ENCODE measurements at regions of chr6 and their contacts with region 1.

Region 1: DNA sequence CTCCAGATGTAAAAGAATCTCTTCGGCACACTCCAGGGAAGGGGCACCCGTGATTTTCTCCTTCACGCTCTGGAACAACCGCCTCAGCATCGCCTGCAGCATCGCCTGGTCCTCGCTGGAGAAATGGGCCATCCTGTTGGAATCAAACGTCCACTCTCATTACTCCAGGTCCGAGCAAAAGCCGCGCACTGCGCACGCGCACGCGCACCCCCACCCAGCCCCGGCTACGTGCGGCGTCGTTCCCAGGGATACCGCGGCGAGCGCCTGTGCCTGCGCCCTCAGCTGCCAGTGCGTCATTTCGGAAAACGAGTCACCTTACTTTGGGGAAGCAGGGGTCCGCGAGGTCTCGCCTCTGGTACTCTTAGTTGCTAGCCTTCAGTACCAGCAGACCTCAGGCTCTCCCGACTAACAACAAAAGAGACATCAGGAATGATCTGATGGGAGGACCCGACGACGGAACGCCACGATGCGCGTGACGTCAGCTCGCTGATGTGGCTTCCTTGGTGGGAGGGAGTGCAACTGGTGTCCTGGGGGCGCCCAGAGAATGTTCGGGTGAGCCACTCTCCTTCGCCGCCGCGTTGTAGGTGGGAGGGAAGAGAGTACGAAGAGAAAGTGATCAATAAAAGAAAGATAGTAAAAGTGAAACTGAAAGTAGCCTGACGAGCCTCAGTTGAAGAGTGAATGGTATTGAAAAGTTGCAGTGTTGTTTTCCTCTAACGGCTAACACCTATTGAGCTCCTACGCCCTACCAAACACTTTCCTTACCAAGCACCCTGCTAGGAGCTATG is at the start of gene TBC1D32:
- DNase-seq: peak; percentile 87
- H3K4me3 Mint-ChIP-seq: peak within 1 kb of the TSS; percentile 98
- H3K27ac Mint-ChIP-seq: peak within 1 kb of the TSS; percentile 97
- H3K4me1 Mint-ChIP-seq: peaks cover 38% of the 10 kb centered on the region
- H3K27me3 Mint-ChIP-seq: no peaks in the 10 kb centered on the region
- total RNA-seq, gene TBC1D32: 6.9 to 8.2 TPM

Region 2: DNA sequence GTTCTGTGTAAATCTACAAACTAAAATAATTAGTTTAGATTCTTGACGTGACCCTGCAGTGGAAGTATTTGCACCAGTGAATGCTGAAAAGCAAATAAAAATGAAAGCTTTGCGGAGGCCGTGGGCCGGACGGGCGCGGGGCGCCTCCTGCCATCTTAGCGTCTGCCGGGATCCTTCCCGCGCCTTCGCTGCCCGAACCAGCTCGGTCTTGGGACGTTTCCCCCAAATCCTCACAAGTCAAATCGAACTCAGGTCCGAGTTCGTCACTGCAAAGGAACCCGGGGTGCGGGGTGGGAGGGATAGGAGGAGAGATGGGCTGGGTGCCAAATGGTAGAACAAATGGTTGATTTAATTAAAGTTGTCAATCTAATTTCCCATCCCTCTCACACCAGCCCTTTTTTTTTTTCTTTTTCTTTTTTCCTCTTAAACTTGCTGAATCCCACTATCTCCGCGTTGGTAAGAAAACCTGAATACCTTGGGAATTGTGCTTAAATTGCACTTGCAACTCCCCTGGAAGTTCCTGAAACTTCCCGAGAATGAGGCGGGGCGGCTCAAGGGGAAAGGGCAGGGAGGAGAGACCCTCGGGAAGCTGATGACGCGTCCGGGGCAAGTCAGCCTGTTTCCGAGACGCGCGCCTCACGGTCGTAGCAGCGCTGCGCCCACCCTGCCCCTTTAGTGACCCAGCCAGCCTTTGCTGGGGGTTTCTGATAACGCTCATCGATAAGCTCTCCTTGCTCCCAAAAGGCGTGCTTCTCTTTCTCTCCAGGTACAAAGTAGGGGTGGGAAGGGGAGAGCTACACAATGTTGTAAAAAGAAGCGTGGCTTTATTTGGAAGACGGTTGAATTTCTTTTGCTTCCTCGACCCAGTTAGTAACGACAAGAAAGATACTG is 102.7 kb after region 1 on chr6:
- CTCF ChIA-PET with region 1: no interaction called
- intact Hi-C with region 1: loop called (anchors 2 kb)
- DNase-seq: peak; percentile 28
- H3K4me3 Mint-ChIP-seq: peak overlapping the region; percentile 75
- H3K27ac Mint-ChIP-seq: no peak overlapping the region
- H3K4me1 Mint-ChIP-seq: peaks cover 19% of the 10 kb centered on the region
- H3K27me3 Mint-ChIP-seq: peaks cover 13% of the 10 kb centered on the region

Region 3: DNA sequence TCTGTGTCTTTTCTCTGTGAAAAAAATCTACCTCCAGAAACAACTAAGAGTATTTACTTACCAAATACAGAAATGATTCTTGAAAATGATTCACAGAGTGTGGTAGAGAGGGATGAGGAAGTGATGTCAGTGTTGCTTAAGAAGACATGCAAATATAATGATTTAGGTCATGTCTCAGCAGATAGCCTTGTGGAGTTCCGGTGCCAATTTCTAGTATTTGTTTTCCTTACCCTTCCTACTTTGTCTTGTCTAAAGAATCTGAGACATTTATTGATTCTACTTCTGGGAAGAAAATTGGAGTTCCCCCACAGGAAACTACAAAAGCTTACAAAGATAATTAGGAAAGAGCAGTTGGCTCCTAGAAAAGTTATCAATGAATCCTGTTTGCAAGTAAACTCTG is 169.7 kb after region 1 on chr6:
- CTCF ChIA-PET with region 1: no interaction called
- intact Hi-C with region 1: loop called (anchors 1 kb)
- DNase-seq: no peak
- H3K4me3 Mint-ChIP-seq: no peak overlapping the region
- H3K27ac Mint-ChIP-seq: peak overlapping the region; percentile 62
- H3K4me1 Mint-ChIP-seq: peaks cover 16% of the 10 kb centered on the region
- H3K27me3 Mint-ChIP-seq: no peaks in the 10 kb centered on the region

Region 4: GRCh38 chr6:121652726-121653623 is 318.5 kb after region 1 on chr6:
- CTCF ChIA-PET with region 1: no interaction called
- intact Hi-C with region 1: loop called (anchors 5 kb)
- DNase-seq: peak; percentile 8
- H3K4me3 Mint-ChIP-seq: no peak overlapping the region
- H3K27ac Mint-ChIP-seq: no peak overlapping the region
- H3K4me1 Mint-ChIP-seq: peaks cover 40% of the 10 kb centered on the region
- H3K27me3 Mint-ChIP-seq: no peaks in the 10 kb centered on the region

Region 5: DNA sequence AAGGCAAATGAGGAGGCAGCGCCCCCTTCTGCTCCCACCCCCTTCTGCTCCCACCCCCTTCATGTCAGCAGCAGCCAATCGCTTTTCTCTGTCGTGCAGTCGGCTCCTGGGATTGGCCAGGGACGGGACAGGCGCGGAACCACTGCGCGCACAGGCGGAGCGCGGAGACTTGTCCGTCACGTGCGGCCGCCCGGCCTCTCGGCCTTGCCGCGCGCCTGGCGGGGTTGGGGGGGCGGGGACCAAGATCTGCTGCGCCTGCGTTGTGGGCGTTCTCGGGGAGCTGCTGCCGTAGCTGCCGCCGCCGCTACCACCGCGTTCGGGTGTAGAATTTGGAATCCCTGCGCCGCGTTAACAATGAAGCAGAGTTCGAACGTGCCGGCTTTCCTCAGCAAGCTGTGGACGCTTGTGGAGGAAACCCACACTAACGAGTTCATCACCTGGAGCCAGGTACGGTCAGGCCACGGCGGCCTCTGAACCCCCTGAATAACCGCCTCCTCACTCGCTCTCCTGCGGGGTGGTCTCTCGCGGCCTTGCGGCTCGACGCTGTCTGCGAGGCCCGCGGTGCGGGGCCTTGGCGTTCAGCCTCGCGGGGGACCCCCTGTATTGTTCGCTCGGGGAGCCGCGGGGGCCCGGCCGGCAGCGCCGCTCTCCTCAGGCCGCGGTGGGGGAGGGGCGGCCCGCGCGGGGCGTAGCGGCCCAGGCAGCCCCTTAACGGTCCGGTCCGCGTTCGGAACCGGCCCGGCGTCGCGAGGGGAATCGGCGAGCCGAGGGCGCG is 1065.1 kb after region 1 on chr6 and contains the start of gene HSF2:
- CTCF ChIA-PET with region 1: no interaction called
- intact Hi-C with region 1: loop called (anchors 2 kb)
- DNase-seq: peak; percentile 97
- H3K4me3 Mint-ChIP-seq: peak within 1 kb of the TSS; percentile 97
- H3K27ac Mint-ChIP-seq: peak within 1 kb of the TSS; percentile 95
- H3K4me1 Mint-ChIP-seq: peaks cover 42% of the 10 kb centered on the region
- H3K27me3 Mint-ChIP-seq: no peaks in the 10 kb centered on the region
- total RNA-seq, gene HSF2: 22.0 to 27.0 TPM